Activated T-helper 2 cell treated with anti-CD3 and anti-CD28 coated beads, Interferon-gamma antibody, Interleukin-2, Interleukin-4, amounts not matched to agents 10 μg/mL and 5 μg/mL and 100 μg/mL, durations not matched to agents 14 hours and 24 hours and 36 hours (primary cell): ENCODE measurements at regions of chr2 and their contacts with region 1.

Region 1: DNA sequence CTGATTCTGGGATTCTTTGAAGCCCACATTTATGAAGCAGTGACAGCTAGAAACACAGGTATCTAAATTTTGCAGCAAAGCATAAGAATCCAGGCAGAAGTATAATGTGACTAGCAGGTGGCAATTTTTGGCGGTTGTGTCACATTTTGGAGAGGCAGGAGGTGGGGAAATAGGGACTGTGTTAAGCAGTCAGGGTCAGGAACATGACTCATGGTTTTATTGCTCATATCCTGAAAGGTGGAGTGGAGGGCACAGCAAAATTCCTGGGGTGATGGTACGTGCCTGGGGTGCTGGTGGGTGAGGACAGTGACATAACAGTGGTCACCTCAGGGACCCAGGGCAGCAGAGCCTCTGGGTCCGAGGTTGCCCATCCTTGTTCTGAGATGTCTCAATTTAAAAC is 63.5 kb upstream of the TTN start:
- DNase-seq: no peak
- H3K4me3 Mint-ChIP-seq: no peak overlapping the region
- H3K27ac Mint-ChIP-seq: no peak overlapping the region
- H3K4me1 Mint-ChIP-seq: peaks cover 22% of the 10 kb centered on the region
- H3K27me3 Mint-ChIP-seq: no peaks in the 10 kb centered on the region

Region 2: DNA sequence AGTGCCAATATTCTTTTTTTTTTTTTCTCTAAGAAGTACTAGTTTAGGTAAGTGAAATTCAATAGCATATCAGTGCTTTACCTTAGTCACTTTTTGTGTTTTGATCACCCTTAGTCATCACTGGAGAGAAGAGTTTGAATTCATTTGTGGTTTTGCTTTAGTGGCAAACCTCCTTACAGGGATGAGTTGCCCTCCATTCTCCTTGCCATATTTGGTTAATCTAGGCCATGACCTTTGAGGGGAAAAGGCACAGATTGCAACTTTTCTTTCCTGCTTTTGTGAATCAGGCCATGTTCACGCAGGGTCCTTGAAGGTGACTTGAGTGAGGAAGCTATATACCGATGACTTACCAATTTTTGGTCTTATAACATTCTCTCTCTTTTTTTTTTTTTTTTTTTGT is 356.0 kb before region 1 on chr2:
- intact Hi-C with region 1: loop called (anchors 1 kb)
- DNase-seq: no peak
- H3K4me3 Mint-ChIP-seq: peak overlapping the region; percentile 58
- H3K27ac Mint-ChIP-seq: peak overlapping the region; percentile 78
- H3K4me1 Mint-ChIP-seq: peaks cover 27% of the 10 kb centered on the region
- H3K27me3 Mint-ChIP-seq: no peaks in the 10 kb centered on the region

Region 3: DNA sequence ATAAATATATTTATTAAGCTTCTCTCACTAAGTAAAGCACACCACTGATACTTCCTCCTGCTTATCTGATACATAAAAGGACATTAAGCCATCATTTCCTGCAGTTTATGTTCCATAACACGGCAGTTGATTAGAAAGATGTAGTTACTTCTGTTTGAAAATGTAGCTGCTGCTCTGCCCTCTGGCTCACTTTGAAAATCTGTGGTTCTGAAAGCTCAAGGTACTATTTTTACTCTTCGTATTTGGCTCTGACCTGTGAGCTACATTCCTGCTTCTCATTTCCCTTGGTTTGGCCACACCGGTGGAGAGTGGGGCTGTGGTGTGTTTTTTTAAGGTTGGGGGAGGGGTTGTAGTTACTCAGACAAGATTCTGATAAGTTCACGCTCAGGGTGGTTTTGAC is 50.7 kb before region 1 on chr2:
- intact Hi-C with region 1: loop called (anchors 5 kb)
- DNase-seq: peak; percentile 11
- H3K4me3 Mint-ChIP-seq: peak overlapping the region; percentile 61
- H3K27ac Mint-ChIP-seq: peak overlapping the region; percentile 87
- H3K4me1 Mint-ChIP-seq: peaks cover 18% of the 10 kb centered on the region
- H3K27me3 Mint-ChIP-seq: no peaks in the 10 kb centered on the region